ENCODE measurements at regions of chr15 and their contacts with region 1.

Region 1: GRCh38 chr15:74202452-74203428 is at the start of gene STRA6:
- DNase-seq: no peak
- H3K4me3 ChIP-seq: no peak within 1 kb of the TSS
- H3K27ac ChIP-seq: peak within 1 kb of the TSS in 1 of 2 donors; percentile 60
- H3K4me1 ChIP-seq: peaks cover 27 to 36% of the 10 kb centered on the region in 2 donors
- H3K27me3 ChIP-seq: no peaks in the 10 kb centered on the region
- CTCF ChIP-seq: no peak
- total RNA-seq, gene STRA6: not detected

Region 2: GRCh38 chr15:73156431-73157191 is 1046.1 kb before region 1 on chr15:
- intact Hi-C with region 1: no loop called
- DNase-seq: no peak
- H3K4me3 ChIP-seq: no peak overlapping the region
- H3K27ac ChIP-seq: no peak overlapping the region
- H3K4me1 ChIP-seq: peaks cover 0 to under 1% of the 10 kb centered on the region in 2 donors
- H3K27me3 ChIP-seq: no peaks in the 10 kb centered on the region
- CTCF ChIP-seq: no peak

Region 3: DNA sequence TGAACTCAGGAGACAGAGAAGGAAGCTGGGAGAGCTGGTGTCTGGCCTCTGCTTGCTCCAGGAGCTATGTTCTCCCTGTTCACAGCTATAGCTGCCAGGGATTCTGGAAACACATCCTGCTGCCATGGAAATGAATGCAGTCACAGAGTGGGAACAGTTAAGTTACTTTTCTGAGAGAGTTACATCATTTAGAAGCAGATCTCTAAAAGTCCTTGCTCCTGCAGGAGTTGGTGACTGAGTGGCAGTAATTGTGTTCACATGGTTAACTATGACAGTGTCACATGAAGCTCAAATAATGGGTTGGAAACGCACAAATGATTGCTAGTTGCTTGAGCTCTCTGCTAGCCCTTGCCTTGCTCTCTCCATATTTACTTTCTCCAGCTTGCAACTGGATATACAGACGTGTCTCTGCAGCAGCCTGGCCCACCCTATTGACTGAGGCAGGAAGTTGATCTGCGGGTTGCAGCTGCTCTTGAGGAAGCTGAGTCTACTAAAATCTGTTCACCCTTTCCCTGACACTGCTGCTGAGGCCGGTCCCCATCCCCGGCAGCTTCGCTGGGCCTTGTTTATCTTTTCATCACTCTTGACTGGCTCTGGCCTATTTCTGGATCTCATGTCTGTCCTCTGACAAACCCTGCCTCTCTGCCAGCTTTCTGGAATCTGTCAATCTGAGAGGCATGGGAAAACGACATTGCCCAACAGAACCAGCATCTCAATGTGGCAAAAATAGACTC is 45.9 kb before region 1 on chr15:
- intact Hi-C with region 1: loop called (anchors 5 kb)
- DNase-seq: peak in 1 of 2 donors; percentile 80
- H3K4me3 ChIP-seq: no peak overlapping the region
- H3K27ac ChIP-seq: peak overlapping the region; percentile 59 to 72
- H3K4me1 ChIP-seq: peaks cover 3 to 25% of the 10 kb centered on the region in 2 donors
- H3K27me3 ChIP-seq: no peaks in the 10 kb centered on the region
- CTCF ChIP-seq: no peak

Region 4: GRCh38 chr15:74179341-74179841 is 23.3 kb before region 1 on chr15:
- intact Hi-C with region 1: loop called (anchors 2 kb)
- DNase-seq: peak; percentile 83 to 97
- H3K4me3 ChIP-seq: no peak overlapping the region
- H3K27ac ChIP-seq: peak overlapping the region; percentile 82 to 85
- H3K4me1 ChIP-seq: peaks cover 42 to 59% of the 10 kb centered on the region in 2 donors
- H3K27me3 ChIP-seq: no peaks in the 10 kb centered on the region
- CTCF ChIP-seq: no peak

Region 5: GRCh38 chr15:74240002-74240568 is 37.3 kb after region 1 on chr15:
- intact Hi-C with region 1: loop called (anchors 2 kb)
- DNase-seq: peak; percentile 47 to 91
- H3K4me3 ChIP-seq: no peak overlapping the region
- H3K27ac ChIP-seq: peak overlapping the region; percentile 36 to 51
- H3K4me1 ChIP-seq: peaks cover 20 to 32% of the 10 kb centered on the region in 2 donors
- H3K27me3 ChIP-seq: no peaks in the 10 kb centered on the region
- CTCF ChIP-seq: peak; percentile 60 to 63 (median 63)

Measured in ascending aorta (tissue), 2 donors.